Activated T-helper 1 cell treated with anti-CD3 and anti-CD28 coated beads, Interleukin-12 subunit alpha, Interleukin-12 subunit beta, Interleukin-2, Interleukin-4 antibody, amounts not matched to agents 30 ng/mL and 10 ng/mL and 1 ng/mL, durations not matched to agents 14 hours and 24 hours and 36 hours (primary cell): ENCODE measurements at regions of chr6 and their contacts with region 1.

Region 1: GRCh38 chr6:14816116-14816859 is 429.6 kb upstream of the JARID2 start:
- DNase-seq: no peak
- H3K4me3 Mint-ChIP-seq: no peak overlapping the region
- H3K27ac Mint-ChIP-seq: no peak overlapping the region
- H3K4me1 Mint-ChIP-seq: peaks cover 22% of the 10 kb centered on the region
- H3K27me3 Mint-ChIP-seq: peaks cover 3% of the 10 kb centered on the region

Region 2: DNA sequence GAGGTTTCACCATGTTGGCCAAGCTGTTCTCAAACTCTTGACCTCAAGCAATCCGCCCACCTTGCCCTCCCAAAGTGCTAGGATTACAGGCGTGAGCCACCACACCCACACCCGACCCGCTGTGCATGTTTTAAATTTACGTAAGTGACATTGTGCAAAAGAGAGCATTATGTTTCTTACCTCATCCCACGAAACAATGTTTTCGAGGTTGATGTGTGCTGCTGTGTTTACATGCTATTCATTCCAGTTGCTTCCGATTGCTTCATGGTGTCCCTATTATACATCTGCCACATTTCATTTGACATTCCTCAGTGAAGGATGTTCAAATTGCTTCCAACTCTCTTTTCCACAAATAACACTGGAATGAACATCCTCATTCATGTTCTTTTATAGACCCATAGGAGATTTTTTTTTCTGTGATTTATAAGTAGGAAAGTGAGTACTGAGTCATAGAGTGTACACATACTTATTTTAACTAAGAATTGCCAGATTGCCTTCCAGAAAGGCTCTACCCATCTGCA is 25.7 kb after region 1 on chr6:
- intact Hi-C with region 1: loop called (anchors 2 kb)
- DNase-seq: no peak
- H3K4me3 Mint-ChIP-seq: no peak overlapping the region
- H3K27ac Mint-ChIP-seq: peak overlapping the region; percentile 30
- H3K4me1 Mint-ChIP-seq: peaks cover 16% of the 10 kb centered on the region
- H3K27me3 Mint-ChIP-seq: peaks cover 1% of the 10 kb centered on the region